ENCODE measurements at regions of chr14 and their contacts with region 1.

Region 1: GRCh38 chr14:69090187-69090789 is 62.6 kb downstream of the DCAF5 start:
- DNase-seq: no peak
- H3K4me3 ChIP-seq: no peak overlapping the region
- H3K27me3 ChIP-seq: no peaks in the 10 kb centered on the region
- CTCF ChIP-seq: peak; percentile 77

Region 2: DNA sequence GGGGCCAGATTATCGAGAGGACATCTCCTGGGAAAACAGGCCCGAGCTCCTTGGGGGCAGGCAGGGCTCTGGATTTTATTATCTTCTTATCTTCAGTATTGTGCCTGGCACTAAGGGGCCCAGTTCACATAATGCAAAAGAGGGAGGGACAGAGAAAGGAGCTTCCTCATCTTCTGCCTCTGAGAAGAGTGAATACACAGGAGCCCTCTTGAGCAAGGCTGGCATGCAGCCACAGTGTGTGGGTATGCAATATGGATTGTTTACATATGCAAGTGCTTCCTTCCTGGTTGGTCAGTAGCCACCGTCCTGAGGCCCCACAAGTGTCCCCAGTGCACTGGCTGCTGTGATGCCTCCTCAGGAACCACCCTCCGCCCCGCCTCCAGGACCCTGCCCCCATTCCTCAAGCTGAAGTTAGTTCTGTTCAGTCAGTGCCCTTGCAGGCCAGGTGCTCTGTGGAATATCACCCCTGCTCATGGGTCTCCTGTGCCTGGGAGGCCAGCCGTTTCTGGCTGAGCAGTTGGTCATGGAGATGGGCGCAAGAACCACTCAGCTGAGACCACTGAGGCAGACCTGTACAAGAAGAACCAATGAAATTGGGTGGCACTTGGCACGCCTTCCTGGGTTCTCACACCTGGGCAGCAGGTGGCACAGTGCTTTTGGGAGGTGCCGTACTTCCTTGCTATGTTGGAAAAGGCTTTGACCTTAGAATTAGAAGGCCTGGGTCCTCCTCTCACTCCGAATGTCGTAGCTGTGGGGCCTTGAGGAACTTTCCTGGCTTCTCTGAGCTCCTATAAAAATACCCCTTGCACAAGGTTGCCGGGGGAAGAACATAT is 76.1 kb before region 1 on chr14:
- CTCF ChIA-PET with region 1: interaction called, 5 read pairs
- POLR2A ChIA-PET with region 1: interaction called, 20 read pairs
- DNase-seq: no peak
- H3K4me3 ChIP-seq: no peak overlapping the region
- H3K27me3 ChIP-seq: no peaks in the 10 kb centered on the region
- CTCF ChIP-seq: no peak

Region 3: GRCh38 chr14:69101331-69101826 is 11.1 kb after region 1 on chr14:
- CTCF ChIA-PET with region 1: interaction called, 10 read pairs
- POLR2A ChIA-PET with region 1: no interaction called
- DNase-seq: peak; percentile 60
- H3K4me3 ChIP-seq: no peak overlapping the region
- H3K27me3 ChIP-seq: no peaks in the 10 kb centered on the region
- CTCF ChIP-seq: peak; percentile 75

Region 4: DNA sequence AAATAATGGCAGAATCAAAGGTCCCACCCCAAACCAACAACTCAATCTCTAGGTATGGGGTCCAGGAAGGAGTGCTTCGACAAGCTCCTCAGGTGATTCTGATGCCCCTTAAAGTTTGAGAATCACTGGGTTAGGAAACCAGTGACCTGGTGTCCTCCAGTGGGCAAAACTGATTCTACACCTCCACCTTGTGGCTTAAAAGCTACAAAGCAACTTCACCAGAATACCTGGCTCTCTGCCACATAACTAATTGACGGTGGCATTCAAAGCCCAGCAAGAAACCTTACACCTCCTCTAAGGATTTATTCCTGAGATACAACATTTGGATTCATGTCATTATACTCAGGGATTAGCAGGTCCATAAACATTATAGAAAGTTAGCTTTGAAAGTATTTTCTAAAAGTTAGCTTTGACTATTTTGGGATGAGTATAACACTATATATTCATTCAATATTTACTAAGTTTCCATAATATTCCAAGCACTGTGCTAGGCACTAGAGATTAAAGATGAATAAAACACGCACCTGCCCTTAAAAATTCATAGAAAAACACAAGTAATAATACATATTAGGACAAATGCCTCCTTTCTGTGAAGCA is 17.2 kb after region 1 on chr14:
- CTCF ChIA-PET with region 1: interaction called, 10 read pairs
- POLR2A ChIA-PET with region 1: no interaction called
- DNase-seq: no peak
- H3K4me3 ChIP-seq: no peak overlapping the region
- H3K27me3 ChIP-seq: no peaks in the 10 kb centered on the region
- CTCF ChIP-seq: peak; percentile 65